ENCODE measurements at regions of chr17 and their contacts with region 1.

Region 1: DNA sequence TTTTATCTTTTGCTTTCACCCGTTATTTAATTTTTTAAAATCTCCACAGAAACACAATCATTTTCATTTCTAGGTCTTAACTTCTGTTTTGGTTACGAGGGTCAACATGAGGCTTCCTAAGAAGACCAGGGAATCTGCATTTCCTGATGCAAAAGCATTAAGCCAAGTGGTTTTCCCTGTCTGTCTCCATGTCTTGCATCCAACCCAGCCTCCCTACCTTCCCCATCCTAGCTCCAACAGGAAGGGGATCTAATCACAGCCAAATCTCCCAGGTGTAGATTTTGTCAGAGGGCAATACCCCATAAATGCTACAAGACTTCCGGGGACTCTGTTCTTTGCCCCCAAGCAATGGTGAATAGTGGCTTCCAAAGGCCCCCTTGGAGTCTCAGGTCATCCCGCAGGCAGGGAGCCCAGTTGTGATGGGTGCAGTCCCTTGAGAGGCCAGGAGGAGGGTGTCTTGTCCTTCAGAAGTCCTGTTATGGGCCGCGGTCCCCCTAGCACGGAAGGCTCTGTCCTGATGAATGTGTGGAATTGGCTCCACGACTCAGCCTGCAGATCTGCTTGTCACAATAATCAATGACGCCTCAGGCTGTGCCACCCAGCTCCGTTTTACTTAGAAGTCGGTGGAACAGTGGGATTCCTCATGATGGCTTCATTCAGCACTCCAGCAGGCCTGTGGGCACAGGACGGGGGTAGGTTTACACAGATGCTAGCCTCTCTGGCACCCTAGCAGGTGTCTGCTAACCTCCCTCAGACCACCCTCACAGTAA is 141.1 kb downstream of the RGS9 start:
- DNase-seq: peak; percentile 58
- H3K4me3 ChIP-seq: no peak overlapping the region
- H3K27ac ChIP-seq: no peak overlapping the region
- H3K4me1 ChIP-seq: peaks cover 1% of the 10 kb centered on the region
- H3K27me3 ChIP-seq: no peaks in the 10 kb centered on the region
- CTCF ChIP-seq: peak; percentile 79 to 80
- POLR2A ChIP-seq: no peak

Region 2: GRCh38 chr17:64736804-64737492 is 541.3 kb before region 1 on chr17:
- CTCF ChIA-PET with region 1: no interaction called
- POLR2A ChIA-PET with region 1: no interaction called
- dilution Hi-C with region 1: no loop called
- intact Hi-C with region 1: no loop called
- DNase-seq: peak; percentile 75
- H3K4me3 ChIP-seq: no peak overlapping the region
- H3K27ac ChIP-seq: no peak overlapping the region
- H3K4me1 ChIP-seq: peaks cover 42% of the 10 kb centered on the region
- H3K27me3 ChIP-seq: no peaks in the 10 kb centered on the region
- CTCF ChIP-seq: peak; percentile 66 to 71
- POLR2A ChIP-seq: no peak

Region 3: GRCh38 chr17:65163990-65164495 is 114.2 kb before region 1 on chr17:
- CTCF ChIA-PET with region 1: no interaction called
- POLR2A ChIA-PET with region 1: no interaction called
- dilution Hi-C with region 1: no loop called
- intact Hi-C with region 1: no loop called
- DNase-seq: no peak
- H3K4me3 ChIP-seq: no peak overlapping the region
- H3K27ac ChIP-seq: no peak overlapping the region
- H3K4me1 ChIP-seq: no peaks in the 10 kb centered on the region
- H3K27me3 ChIP-seq: peaks cover 0 to 14% of the 10 kb centered on the region in 2 experiments
- CTCF ChIP-seq: no peak
- POLR2A ChIP-seq: no peak

Region 4: DNA sequence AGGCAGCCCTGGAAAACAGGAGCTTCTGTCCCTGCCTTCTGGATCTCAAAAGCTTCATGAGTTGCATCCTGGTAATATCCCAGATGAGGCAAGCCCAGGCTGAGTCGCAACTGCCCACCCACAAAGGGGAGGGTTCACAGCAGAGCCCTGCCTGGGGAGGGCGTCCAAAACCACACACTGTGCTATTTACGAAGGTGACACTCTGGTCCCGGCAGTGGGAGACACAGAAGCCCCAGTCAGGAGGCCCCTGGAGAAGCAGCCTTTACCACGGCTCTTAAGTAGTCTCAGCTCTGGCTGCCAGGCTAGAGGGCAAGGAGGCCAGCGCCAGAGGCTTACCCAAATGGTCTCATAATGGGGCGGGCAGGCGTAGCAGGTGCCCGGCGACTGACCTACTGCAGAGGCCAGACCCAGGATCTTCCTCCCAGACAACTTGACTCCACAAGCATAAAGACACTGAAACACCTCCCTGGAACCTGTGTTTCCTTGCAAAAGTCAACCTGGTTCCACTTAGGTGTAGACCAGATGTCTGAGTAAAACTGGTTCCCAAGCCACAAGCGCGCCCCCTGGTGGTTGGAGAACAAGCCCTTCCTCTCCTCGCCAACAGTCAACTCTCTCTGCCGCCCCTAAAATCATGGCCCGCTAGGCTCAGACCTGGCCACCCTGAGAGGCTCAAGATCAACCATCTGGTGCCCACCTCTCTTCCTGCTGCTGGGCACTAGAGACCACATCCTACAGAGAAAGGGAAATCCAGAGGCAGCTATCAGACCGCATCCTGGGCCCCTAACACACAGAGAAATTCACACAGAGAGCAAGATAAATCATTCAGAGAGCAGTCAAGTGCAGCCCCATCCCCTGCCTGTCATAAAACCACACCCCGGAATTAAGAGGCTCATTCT is 278.0 kb after region 1 on chr17:
- CTCF ChIA-PET with region 1: interaction called, 8 read pairs
- POLR2A ChIA-PET with region 1: no interaction called
- dilution Hi-C with region 1: no loop called
- intact Hi-C with region 1: loop called (anchors 1 kb)
- DNase-seq: peak; percentile 21
- H3K4me3 ChIP-seq: no peak overlapping the region
- H3K27ac ChIP-seq: no peak overlapping the region
- H3K4me1 ChIP-seq: peaks cover 5% of the 10 kb centered on the region
- H3K27me3 ChIP-seq: peaks cover 4 to 5% of the 10 kb centered on the region in 2 experiments
- CTCF ChIP-seq: peak; percentile 76 to 79
- POLR2A ChIP-seq: no peak

Region 5: GRCh38 chr17:65794572-65794971 is 516.3 kb after region 1 on chr17:
- CTCF ChIA-PET with region 1: interaction called, 9 read pairs
- POLR2A ChIA-PET with region 1: no interaction called
- dilution Hi-C with region 1: no loop called
- intact Hi-C with region 1: loop called (anchors 1 kb)
- DNase-seq: peak; percentile 35
- H3K4me3 ChIP-seq: no peak overlapping the region
- H3K27ac ChIP-seq: no peak overlapping the region
- H3K4me1 ChIP-seq: peaks cover 3% of the 10 kb centered on the region
- H3K27me3 ChIP-seq: no peaks in the 10 kb centered on the region
- CTCF ChIP-seq: peak; percentile 31 to 56
- POLR2A ChIP-seq: no peak

Region 6: DNA sequence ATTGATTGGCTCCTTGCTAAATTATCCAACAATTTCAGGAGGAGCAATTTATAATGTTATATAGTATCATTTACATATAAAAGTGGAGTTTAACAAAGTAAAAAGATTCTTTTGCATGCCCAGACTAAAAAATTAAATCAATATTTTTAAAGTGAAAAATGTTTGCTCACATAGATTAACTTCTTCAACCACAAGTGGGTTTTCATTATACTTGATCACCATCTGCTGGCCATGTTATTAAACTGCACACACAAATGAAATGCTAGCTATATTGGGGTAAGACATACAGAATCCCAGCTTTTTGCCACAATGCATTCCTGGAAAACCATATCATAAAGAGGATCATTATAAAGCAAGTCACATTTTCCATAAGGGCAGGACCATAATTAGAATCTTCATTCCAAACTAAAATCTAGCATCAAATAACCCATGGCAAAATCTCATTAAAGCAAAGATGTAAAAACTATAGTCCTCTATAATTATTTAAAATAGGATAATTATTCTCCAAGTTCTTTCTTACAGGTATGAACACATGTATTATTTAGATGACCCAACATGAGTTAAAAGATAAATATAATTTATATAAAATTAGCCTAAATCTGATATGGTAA is 887.4 kb after region 1 on chr17:
- CTCF ChIA-PET with region 1: interaction called, 62 read pairs
- POLR2A ChIA-PET with region 1: no interaction called
- dilution Hi-C with region 1: no loop called
- intact Hi-C with region 1: loop called (anchors 1 kb)
- DNase-seq: peak; percentile 72
- H3K4me3 ChIP-seq: no peak overlapping the region
- H3K27ac ChIP-seq: no peak overlapping the region
- H3K4me1 ChIP-seq: no peaks in the 10 kb centered on the region
- H3K27me3 ChIP-seq: no peaks in the 10 kb centered on the region
- CTCF ChIP-seq: peak; percentile 33 to 45
- POLR2A ChIP-seq: no peak

Measured in endothelial cell of umbilical vein (primary cell).